ENCODE measurements at regions of chr2 and their contacts with region 1.

Region 1: GRCh38 chr2:126644630-126645191 is 11.2 kb upstream of the GYPC start:
- DNase-seq: peak; percentile 44 to 89 (median 50)
- ATAC-seq: peak; percentile 79
- H3K4me3 ChIP-seq: peak overlapping the region; percentile 18; the same call in 1 of the 2 replicates
- H3K27ac ChIP-seq: peak overlapping the region; percentile 66
- H3K4me1 ChIP-seq: peaks cover 27 to 76% of the 10 kb centered on the region in 2 experiments
- H3K27me3 ChIP-seq: no peaks in the 10 kb centered on the region
- CTCF ChIP-seq: no peak
- EP300 ChIP-seq: peak; percentile 39; the same call in 1 of the 2 replicates
- POLR2A ChIP-seq: 0 out of 2 replicates have a peak, but pooled peaks have one; percentile 37
- RAD21 ChIP-seq: no peak

Region 2: GRCh38 chr2:126674075-126674744 is 29.5 kb after region 1 on chr2:
- CTCF ChIA-PET with region 1: no interaction called
- POLR2A ChIA-PET with region 1: interaction called, 3 read pairs
- in situ Hi-C with region 1: no loop called
- intact Hi-C with region 1: loop called (anchors 1 kb)
- DNase-seq: peak; percentile 87 to 97 (median 92)
- ATAC-seq: peak; percentile 85
- H3K4me3 ChIP-seq: peak overlapping the region; percentile 5; the same call in 1 of the 2 replicates
- H3K27ac ChIP-seq: peak overlapping the region; percentile 78
- H3K4me1 ChIP-seq: peaks cover 48 to 69% of the 10 kb centered on the region in 2 experiments
- H3K27me3 ChIP-seq: no peaks in the 10 kb centered on the region
- CTCF ChIP-seq: peak; percentile 25 to 61 (median 41); a peak in 4 of 6 replicates
- EP300 ChIP-seq: peak; percentile 96
- POLR2A ChIP-seq: no peak
- RAD21 ChIP-seq: no peak; a peak in 1 of 4 replicates

Region 3: GRCh38 chr2:126699716-126700581 is 55.2 kb after region 1 on chr2:
- CTCF ChIA-PET with region 1: no interaction called
- POLR2A ChIA-PET with region 1: no interaction called
- in situ Hi-C with region 1: no loop called
- intact Hi-C with region 1: no loop called
- DNase-seq: no peak
- ATAC-seq: peak; percentile 8; the same call in 1 of the 3 replicates
- H3K4me3 ChIP-seq: no peak overlapping the region
- H3K27ac ChIP-seq: no peak overlapping the region
- H3K4me1 ChIP-seq: peaks cover 0 to 3% of the 10 kb centered on the region in 2 experiments; a peak in 1 of 5 replicates
- H3K27me3 ChIP-seq: no peaks in the 10 kb centered on the region
- CTCF ChIP-seq: no peak
- EP300 ChIP-seq: no peak
- POLR2A ChIP-seq: no peak
- RAD21 ChIP-seq: no peak

Region 4: DNA sequence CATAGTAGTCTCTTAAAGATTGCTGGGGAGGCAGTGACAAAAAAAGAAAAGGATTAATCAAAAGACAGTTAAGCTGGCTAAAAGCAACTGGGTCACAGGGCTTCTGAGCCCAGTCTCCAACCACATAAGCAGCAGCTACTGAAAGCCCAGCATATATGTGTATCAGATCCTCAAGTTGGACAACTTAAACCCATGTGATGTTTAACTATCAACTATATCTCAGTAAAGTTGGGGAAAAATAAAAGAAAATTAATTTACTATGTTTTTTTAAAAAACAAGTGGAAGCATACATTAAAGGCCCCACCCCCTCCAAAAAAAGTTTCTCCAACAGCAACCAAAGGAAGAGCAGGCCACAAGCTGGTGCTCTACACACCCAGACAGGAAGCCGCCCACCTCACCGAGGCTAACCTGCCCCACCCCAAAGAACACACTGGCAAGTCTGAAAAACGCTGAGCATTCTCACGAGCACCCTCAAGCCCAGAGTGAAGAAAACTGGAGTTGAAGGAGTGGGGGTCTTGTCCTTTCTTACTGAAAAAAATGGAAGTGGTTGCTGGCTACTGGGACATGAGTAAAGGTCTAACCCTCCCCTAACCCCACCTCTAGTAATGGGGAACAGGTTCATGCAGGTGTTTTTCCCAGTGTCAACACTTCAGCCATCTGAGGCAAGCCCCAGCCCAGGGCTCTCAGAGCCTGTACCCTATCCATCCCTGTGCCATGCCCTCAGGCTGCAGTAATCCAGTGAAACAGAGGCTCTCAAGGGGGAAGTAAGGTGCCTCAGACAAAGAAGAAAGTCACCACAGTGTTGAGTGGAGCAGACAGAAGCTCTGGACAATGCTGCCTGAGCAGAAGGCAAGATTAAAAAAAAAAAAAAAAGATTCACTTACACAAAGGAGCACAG is 117.5 kb after region 1 on chr2:
- CTCF ChIA-PET with region 1: no interaction called
- POLR2A ChIA-PET with region 1: no interaction called
- in situ Hi-C with region 1: no loop called
- intact Hi-C with region 1: no loop called
- DNase-seq: no peak
- ATAC-seq: no peak
- H3K4me3 ChIP-seq: no peak overlapping the region
- H3K27ac ChIP-seq: no peak overlapping the region
- H3K4me1 ChIP-seq: no peaks in the 10 kb centered on the region
- H3K27me3 ChIP-seq: peaks cover 0 to 2% of the 10 kb centered on the region in 2 experiments; a peak in 1 of 5 replicates
- CTCF ChIP-seq: no peak
- EP300 ChIP-seq: no peak
- POLR2A ChIP-seq: no peak
- RAD21 ChIP-seq: no peak

Region 5: DNA sequence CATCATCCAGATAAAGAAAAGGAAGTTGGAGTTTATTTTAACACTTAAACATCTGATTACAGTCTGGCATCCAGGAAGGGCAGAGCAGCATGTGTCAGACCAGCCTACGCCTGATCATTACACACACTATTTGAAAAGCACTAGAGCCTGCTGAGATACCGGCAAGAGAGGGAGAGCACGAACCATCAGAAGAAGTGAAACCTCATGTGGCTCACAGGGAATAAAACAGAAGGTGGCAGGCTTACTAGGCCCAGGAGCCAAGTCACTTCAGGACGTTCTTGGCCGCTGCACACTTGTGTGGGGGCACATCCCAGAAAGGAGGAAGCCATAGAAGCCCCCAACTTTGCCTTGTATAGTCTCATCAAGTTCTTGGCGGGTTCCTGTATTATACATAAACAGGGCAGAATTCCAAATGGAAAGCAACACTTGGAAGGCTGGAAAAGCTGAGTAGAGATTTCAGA is 1551.8 kb after region 1 on chr2:
- CTCF ChIA-PET with region 1: no interaction called
- POLR2A ChIA-PET with region 1: no interaction called
- in situ Hi-C with region 1: no loop called
- intact Hi-C with region 1: loop called (anchors 10 kb)
- DNase-seq: no peak
- ATAC-seq: no peak
- H3K4me3 ChIP-seq: no peak overlapping the region
- H3K27ac ChIP-seq: no peak overlapping the region
- H3K4me1 ChIP-seq: peaks cover 0 to 7% of the 10 kb centered on the region in 2 experiments; a peak in 3 of 5 replicates
- H3K27me3 ChIP-seq: no peaks in the 10 kb centered on the region
- CTCF ChIP-seq: no peak
- EP300 ChIP-seq: no peak
- POLR2A ChIP-seq: no peak
- RAD21 ChIP-seq: no peak